Heart left ventricle (tissue), 16 donors: ENCODE measurements at regions of chr1 and their contacts with region 1.

Region 1: DNA sequence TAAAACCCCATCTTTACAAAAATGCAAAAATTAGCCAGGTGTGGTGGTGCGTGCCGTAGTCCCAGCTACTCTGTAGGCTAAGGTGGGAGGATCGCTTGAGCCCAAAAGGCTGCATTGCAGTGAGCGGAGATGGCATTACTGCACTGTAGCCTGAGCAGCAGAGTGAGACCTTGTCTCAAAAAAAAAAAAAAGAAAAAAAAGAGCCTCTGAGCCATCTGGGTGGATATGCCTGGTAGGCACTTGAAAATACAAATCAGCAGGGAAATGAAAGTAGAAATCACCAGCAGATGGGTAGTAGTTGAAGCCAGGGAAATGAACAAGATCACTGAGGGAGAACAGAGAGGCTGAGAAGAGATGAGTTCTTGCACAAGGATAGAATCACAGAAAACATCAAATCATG is 131.0 kb upstream of the HMCN1 start:
- DNase-seq: no peak
- ATAC-seq: no peak
- H3K4me3 ChIP-seq: no peak overlapping the region
- H3K27ac ChIP-seq: no peak overlapping the region
- H3K4me1 ChIP-seq: peaks cover 0 to 10% (median 0%) of the 10 kb centered on the region in 12 donors
- H3K27me3 ChIP-seq: no peaks in the 10 kb centered on the region
- CTCF ChIP-seq: no peak
- POLR2A ChIP-seq: no peak

Region 2: GRCh38 chr1:185559684-185560331 is 43.4 kb before region 1 on chr1:
- intact Hi-C with region 1: no loop called
- DNase-seq: peak; percentile 33 to 56 (median 48)
- ATAC-seq: peak; percentile 77 to 92 (median 84)
- H3K4me3 ChIP-seq: no peak overlapping the region
- H3K27ac ChIP-seq: peak overlapping the region in 1 of 12 donors; percentile 9
- H3K4me1 ChIP-seq: peaks cover 0 to 31% (median 1%) of the 10 kb centered on the region in 12 donors
- H3K27me3 ChIP-seq: no peaks in the 10 kb centered on the region
- CTCF ChIP-seq: peak in 10 of 12 donors; percentile 14 to 42 (median 30)
- POLR2A ChIP-seq: no peak

Region 3: DNA sequence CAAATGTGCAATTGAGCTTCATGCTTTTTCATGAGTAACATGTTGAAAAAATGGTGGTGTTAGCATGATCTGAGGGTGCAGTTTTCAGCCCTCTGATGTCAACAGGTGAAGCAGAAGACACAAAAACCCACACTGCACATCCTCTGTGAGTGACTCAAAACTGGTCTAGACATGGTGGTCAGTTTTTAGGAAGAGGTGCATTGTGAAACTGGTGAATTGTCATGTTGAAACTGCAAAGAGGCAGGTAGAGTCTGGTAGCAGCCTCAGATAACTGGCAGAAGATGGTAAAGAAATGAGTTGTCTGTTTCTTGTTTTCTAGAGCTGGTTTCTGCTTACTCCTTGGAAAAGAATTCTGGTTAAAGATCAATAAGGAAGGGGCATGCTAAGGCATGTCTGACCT is 33.7 kb after region 1 on chr1:
- intact Hi-C with region 1: loop called in 1 of 10 experiments (anchors 5 kb)
- DNase-seq: no peak
- ATAC-seq: no peak
- H3K4me3 ChIP-seq: no peak overlapping the region
- H3K27ac ChIP-seq: no peak overlapping the region
- H3K4me1 ChIP-seq: peaks cover 0 to 9% (median 0%) of the 10 kb centered on the region in 12 donors
- H3K27me3 ChIP-seq: no peaks in the 10 kb centered on the region
- CTCF ChIP-seq: no peak
- POLR2A ChIP-seq: no peak

Region 4: GRCh38 chr1:185790194-185790735 is 187.1 kb after region 1 on chr1:
- intact Hi-C with region 1: no loop called
- DNase-seq: no peak
- ATAC-seq: peak in 2 of 4 donors; percentile 36 to 50
- H3K4me3 ChIP-seq: no peak overlapping the region
- H3K27ac ChIP-seq: peak overlapping the region in 2 of 12 donors; percentile 44 to 45
- H3K4me1 ChIP-seq: peaks cover 0 to 35% (median 17%) of the 10 kb centered on the region in 12 donors
- H3K27me3 ChIP-seq: no peaks in the 10 kb centered on the region
- CTCF ChIP-seq: no peak
- POLR2A ChIP-seq: no peak